ENCODE measurements at regions of chr10 and their contacts with region 1.

Region 1: DNA sequence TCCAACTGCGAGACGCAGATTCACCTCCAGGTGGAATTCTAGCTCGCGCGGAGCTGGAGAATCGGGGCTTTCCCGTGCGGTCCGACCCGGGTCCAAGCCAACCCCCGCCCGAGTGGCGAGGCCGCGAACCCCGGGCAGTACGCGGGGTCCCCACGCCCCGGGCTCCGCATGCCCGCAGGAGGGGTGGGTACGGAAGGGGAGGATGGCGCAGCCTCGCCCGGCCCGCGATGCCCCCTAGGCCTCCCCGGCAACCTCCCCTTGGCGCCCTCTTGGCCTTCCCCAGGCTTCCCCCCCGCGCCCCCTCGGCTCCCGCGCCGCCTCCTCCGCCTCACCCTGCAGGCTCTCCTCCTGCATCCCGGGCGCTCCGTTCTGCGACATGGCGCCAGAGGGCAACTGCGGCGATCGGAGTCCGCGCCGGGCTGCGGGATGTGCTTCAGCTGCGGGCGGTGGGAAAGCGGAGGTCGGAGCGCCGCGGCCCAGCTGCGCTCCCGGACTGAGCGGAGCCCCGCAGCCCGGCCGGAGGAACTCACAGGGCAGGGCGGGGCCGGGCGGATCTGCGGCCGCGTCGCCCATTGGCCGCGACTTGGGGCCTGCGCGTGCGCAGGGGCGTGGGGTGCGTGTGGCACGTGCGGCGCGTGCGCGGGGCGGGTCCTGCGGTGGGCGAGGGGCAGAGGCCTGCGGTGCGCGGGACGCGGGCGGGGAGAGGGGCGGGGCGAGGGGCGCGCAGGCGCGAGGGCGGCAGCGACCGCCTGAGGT is at the start of gene BNIP3:
- DNase-seq: peak; percentile 89
- H3K4me3 ChIP-seq: peak within 1 kb of the TSS; percentile 58 to 90 (median 79)
- H3K27ac ChIP-seq: peak within 1 kb of the TSS; percentile 64
- H3K4me1 ChIP-seq: peaks cover 14% of the 10 kb centered on the region
- H3K27me3 ChIP-seq: no peaks in the 10 kb centered on the region
- CTCF ChIP-seq: peak in 1 of 2 donors; percentile 26
- total RNA-seq, gene BNIP3: 50.8 to 65.2 TPM

Region 2: GRCh38 chr10:131909014-131909808 is 72.4 kb before region 1 on chr10:
- CTCF ChIA-PET with region 1: no interaction called
- dilution Hi-C with region 1: loop called (anchors 5 kb)
- in situ Hi-C with region 1: no loop called
- intact Hi-C with region 1: loop called (anchors 5 kb)
- DNase-seq: no peak
- H3K4me3 ChIP-seq: no peak overlapping the region
- H3K27ac ChIP-seq: no peak overlapping the region
- H3K4me1 ChIP-seq: peaks cover 34% of the 10 kb centered on the region
- H3K27me3 ChIP-seq: no peaks in the 10 kb centered on the region
- CTCF ChIP-seq: no peak

Region 3: DNA sequence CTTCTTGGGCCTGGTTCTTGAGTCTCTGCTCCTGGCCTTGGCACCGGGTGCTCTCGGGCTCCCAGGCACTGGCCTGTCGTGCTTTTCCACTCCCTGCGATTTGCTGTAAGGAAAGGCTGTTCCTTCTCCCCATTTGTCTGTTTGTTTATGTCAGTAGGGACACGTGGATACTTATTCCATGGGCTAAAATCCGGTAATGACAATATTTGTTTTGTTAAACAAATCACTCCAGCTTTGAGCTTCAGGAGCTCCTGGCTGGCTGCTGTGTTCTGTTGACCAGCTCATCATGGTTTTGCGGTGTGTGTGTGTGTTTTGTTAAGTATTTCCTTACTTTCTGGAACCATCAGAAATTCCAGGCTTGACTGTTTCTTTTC is 66.7 kb after region 1 on chr10:
- CTCF ChIA-PET with region 1: no interaction called
- dilution Hi-C with region 1: no loop called
- in situ Hi-C with region 1: no loop called
- intact Hi-C with region 1: no loop called
- DNase-seq: no peak
- H3K4me3 ChIP-seq: no peak overlapping the region
- H3K27ac ChIP-seq: no peak overlapping the region
- H3K4me1 ChIP-seq: no peaks in the 10 kb centered on the region
- H3K27me3 ChIP-seq: no peaks in the 10 kb centered on the region
- CTCF ChIP-seq: no peak

Region 4: DNA sequence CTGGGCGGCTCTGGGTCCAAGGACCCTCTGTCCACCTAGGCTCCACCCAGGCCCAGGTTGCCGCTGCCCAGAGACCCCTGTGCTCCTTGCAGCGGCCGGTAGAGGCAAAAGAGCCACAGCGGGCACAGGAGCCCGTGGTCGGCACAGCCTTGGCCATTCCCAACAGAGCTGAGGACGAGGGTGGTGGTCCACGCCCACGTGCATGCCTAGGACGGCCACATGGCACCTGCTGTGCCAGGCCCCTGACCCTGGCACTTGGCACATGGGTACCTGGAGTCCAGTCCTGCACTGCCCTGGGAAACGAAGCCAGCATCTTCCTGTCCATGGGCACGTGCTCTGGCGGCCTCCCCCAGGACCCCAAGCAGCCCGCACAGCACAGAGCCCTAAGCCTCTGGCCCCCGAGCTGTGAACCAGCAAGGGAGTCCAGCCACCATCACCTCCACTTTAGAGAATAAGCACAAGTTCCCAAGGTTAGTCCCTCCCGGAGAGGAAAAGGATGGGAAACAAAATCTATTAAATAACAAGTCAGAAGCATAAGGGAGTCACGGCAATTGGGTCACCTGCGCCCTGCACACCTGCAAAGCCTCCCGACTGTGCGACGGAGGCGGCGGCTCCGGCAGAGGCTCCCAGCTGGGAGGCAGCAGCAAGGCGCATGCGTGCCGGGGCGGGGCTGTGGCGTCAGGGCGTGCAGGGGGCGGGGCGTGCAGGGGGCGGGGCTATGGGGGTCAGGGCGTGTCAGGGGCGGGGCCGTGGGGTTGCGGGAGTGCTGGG is 267.0 kb after region 1 on chr10:
- CTCF ChIA-PET with region 1: no interaction called
- dilution Hi-C with region 1: no loop called
- in situ Hi-C with region 1: no loop called
- intact Hi-C with region 1: no loop called
- DNase-seq: peak; percentile 9
- H3K4me3 ChIP-seq: no peak overlapping the region
- H3K27ac ChIP-seq: no peak overlapping the region
- H3K4me1 ChIP-seq: no peaks in the 10 kb centered on the region
- H3K27me3 ChIP-seq: no peaks in the 10 kb centered on the region
- CTCF ChIP-seq: no peak

Measured in mammary epithelial cell (primary cell).